K562 (cell line): ENCODE measurements at regions of chr16 and their contacts with region 1.

Region 1: GRCh38 chr16:72501739-72502593 is 330.0 kb upstream of the PMFBP1 start:
- DNase-seq: peak; percentile 40 to 73 (median 56)
- ATAC-seq: peak; percentile 88
- H3K4me3 ChIP-seq: no peak overlapping the region
- H3K27ac ChIP-seq: no peak overlapping the region
- H3K4me1 ChIP-seq: no peaks in the 10 kb centered on the region
- H3K27me3 ChIP-seq: no peaks in the 10 kb centered on the region
- CTCF ChIP-seq: peak; percentile 73 to 90 (median 77)
- EP300 ChIP-seq: no peak
- POLR2A ChIP-seq: no peak
- RAD21 ChIP-seq: peak; percentile 86 to 87

Region 2: DNA sequence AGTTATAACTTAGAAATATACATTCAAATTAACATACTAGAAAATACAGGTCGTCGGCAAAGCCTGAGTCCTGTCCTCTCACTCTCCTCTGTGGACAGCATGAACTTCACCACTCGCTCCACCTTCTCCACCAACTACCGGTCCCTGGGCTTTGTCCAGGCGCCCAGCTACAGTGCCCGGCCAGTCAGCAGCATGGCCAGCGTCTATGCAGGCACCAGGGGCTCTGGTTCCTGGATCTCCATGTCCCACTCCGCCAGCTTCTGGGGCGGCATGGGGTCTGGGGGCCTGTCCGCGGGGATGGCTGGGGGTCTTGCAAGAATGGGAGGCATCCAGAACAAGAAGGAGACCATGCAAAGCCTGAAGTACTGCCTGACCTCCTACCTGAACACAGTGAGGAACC is 226.6 kb after region 1 on chr16:
- CTCF ChIA-PET with region 1: interaction called, 8 read pairs
- POLR2A ChIA-PET with region 1: no interaction called
- in situ Hi-C with region 1: no loop called
- intact Hi-C with region 1: loop called (anchors 2 kb)
- DNase-seq: no peak
- ATAC-seq: no peak
- H3K4me3 ChIP-seq: no peak overlapping the region
- H3K27ac ChIP-seq: no peak overlapping the region
- H3K4me1 ChIP-seq: no peaks in the 10 kb centered on the region
- H3K27me3 ChIP-seq: no peaks in the 10 kb centered on the region
- CTCF ChIP-seq: no peak
- EP300 ChIP-seq: no peak
- POLR2A ChIP-seq: no peak
- RAD21 ChIP-seq: no peak

Region 3: DNA sequence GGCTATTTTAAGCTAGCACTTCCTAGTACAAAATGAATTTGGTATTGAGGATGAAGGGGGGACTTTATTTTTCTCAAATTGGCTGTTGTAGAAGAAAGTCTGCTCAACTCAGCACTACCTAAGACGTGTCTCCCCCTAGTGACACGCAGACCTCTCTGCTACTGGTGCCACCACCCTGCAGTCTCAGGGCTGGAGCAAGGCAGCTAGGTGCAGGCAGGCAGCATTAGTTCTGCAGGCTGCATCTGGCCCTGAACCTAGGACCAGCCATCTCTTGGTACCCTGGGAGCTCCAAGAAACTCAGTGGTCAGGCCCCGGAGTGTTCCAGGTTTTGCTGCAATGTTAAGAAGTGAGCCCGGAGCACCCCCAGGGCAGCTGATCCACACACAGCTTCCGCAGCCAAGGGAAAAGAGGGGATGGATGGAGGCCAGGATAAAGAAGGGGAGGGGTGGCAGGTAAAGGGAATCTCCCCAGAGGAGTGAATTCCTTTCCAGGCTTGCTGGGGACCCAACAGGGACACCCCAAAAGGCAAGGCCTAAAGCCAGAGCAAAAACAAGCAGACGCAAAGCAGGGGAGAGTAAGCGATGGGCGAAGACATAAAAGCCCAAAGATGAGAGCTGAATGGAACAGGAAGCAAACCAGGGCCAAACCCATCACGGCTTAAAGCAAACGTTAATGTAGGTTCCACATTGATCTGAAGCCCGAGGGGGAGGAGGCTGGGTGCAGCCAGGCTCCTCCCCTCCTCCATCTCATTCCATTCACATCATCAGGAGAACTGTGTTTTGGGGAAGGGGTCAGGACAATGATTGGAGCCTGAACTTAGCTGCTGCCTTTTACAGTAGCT is 345.4 kb after region 1 on chr16:
- CTCF ChIA-PET with region 1: no interaction called
- POLR2A ChIA-PET with region 1: no interaction called
- in situ Hi-C with region 1: no loop called
- intact Hi-C with region 1: loop called (anchors 5 kb)
- DNase-seq: peak; percentile 29 to 34 (median 32)
- ATAC-seq: peak; percentile 88
- H3K4me3 ChIP-seq: no peak overlapping the region
- H3K27ac ChIP-seq: no peak overlapping the region
- H3K4me1 ChIP-seq: peaks cover 0 to 5% of the 10 kb centered on the region in 2 experiments; a peak in 1 of 5 replicates
- H3K27me3 ChIP-seq: peaks cover 12 to 59% of the 10 kb centered on the region in 2 experiments; a peak in 4 of 5 replicates
- CTCF ChIP-seq: peak; percentile 54 to 62 (median 59)
- EP300 ChIP-seq: no peak
- POLR2A ChIP-seq: no peak
- RAD21 ChIP-seq: peak; percentile 36 to 55

Region 4: DNA sequence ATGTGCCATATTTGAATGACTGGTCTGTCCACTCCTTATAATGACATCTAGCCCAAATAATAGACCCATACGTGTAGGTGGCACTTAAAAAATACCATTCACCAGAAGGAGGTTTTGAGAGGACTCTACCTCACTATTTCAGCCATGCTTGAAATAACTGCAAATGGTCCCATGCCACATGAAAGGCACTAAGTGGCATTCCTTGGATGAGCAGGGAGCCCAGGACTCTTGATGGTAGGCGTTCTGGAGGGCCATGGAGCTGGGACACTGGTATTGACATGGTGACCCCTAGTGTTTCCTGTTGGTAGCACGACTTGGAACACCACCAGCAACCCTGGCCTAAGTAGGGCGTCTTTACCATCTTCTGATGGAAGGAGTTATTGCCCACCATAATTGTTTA is 694.7 kb after region 1 on chr16:
- CTCF ChIA-PET with region 1: no interaction called
- POLR2A ChIA-PET with region 1: no interaction called
- in situ Hi-C with region 1: no loop called
- intact Hi-C with region 1: loop called (anchors 2 kb)
- DNase-seq: peak; percentile 59 to 64 (median 62)
- ATAC-seq: peak; percentile 91
- H3K4me3 ChIP-seq: no peak overlapping the region
- H3K27ac ChIP-seq: no peak overlapping the region
- H3K4me1 ChIP-seq: no peaks in the 10 kb centered on the region
- H3K27me3 ChIP-seq: peaks cover 0 to 8% of the 10 kb centered on the region in 2 experiments; a peak in 1 of 5 replicates
- CTCF ChIP-seq: peak; percentile 59 to 70 (median 65)
- EP300 ChIP-seq: no peak
- POLR2A ChIP-seq: no peak
- RAD21 ChIP-seq: peak; percentile 46 to 67

Region 5: DNA sequence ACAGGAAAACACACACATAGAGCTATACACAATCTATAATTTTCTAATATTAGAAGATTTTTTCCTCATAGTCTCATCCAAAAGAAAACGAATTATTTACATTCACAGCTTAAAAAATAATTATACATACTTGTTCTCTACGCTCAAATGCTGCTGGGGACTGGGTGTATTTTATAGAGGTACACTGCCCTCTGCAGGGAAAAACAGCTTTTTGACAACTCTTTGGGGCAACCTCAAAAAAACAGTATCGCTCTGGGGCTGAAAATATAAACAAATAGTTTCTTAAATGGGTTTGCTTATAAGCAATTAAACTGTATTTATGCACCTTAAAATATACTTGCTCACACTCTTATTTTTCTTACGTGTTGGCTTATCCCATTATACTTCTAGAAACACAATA is 1532.9 kb after region 1 on chr16:
- CTCF ChIA-PET with region 1: no interaction called
- POLR2A ChIA-PET with region 1: no interaction called
- in situ Hi-C with region 1: no loop called
- intact Hi-C with region 1: loop called (anchors 5 kb)
- DNase-seq: peak; percentile 8 to 28 (median 17)
- ATAC-seq: peak; percentile 75
- H3K4me3 ChIP-seq: no peak overlapping the region
- H3K27ac ChIP-seq: no peak overlapping the region
- H3K4me1 ChIP-seq: no peaks in the 10 kb centered on the region
- H3K27me3 ChIP-seq: no peaks in the 10 kb centered on the region; a peak in 1 of 5 replicates
- CTCF ChIP-seq: peak in 2 of 3 experiments; percentile 46 to 52; a peak in 4 of 6 replicates
- EP300 ChIP-seq: no peak
- POLR2A ChIP-seq: no peak
- RAD21 ChIP-seq: peak in 1 of 2 experiments; percentile 45; a peak in 2 of 4 replicates